Left colon (tissue), 2 donors: ENCODE measurements at regions of chr6 and their contacts with region 1.

Region 1: DNA sequence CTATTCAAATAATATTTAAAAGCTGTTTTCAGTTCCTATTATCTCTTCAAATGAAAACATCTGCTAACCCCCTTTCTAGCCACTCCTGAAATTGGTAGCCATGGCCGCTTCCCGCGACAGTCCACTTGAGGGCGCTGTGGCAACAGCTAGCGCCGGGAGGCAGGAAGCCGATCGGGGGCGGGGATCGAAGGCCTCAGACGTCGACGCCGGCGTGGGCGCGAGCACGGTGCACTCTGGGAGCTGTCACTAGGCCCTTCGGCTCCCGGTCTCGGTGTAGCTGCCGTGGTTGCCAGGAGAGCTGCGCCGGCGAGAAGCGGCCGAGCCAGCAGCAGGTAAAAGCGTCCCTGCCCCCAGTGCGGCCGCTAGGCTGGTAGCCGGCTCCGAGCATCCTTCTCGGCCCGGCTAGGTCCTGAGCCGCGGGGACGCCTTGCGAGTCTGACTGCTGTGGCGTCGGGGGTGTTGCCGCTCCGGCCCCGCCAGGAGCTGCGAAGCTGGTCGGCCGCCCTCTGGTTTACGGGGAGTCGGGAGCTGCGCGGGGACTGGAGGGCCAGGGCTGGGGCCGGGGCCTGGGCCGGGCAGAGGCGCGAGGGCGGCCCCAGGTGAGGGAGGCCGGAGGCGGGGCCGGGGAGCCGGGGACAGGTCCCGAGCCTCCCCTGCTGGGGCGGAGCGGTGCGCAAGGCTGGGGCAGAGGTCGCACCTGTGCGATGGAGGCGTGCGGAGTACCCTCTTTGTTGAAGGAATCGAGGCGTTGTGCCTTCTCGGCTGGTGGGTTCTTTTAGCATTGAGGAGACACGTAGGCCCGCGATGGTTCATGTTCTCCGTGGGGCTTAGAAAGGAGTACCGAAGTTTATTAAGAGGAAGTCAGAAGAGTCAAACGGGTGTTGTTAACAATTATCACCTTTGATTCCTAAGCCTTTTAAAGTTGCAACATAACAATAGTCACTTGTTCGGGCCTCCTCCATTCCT is at the start of gene DOP1A:
- DNase-seq: peak; percentile 96 to 99
- ATAC-seq: peak; percentile 90
- total RNA-seq, gene DOP1A: 30.8 to 34.5 TPM

Region 2: GRCh38 chr6:82693094-82693493 is 374.6 kb before region 1 on chr6:
- intact Hi-C with region 1: no loop called
- DNase-seq: peak in 1 of 2 donors; percentile 6
- ATAC-seq: no peak

Region 3: GRCh38 chr6:82775361-82775760 is 292.4 kb before region 1 on chr6:
- intact Hi-C with region 1: no loop called
- DNase-seq: no peak
- ATAC-seq: no peak

Region 4: DNA sequence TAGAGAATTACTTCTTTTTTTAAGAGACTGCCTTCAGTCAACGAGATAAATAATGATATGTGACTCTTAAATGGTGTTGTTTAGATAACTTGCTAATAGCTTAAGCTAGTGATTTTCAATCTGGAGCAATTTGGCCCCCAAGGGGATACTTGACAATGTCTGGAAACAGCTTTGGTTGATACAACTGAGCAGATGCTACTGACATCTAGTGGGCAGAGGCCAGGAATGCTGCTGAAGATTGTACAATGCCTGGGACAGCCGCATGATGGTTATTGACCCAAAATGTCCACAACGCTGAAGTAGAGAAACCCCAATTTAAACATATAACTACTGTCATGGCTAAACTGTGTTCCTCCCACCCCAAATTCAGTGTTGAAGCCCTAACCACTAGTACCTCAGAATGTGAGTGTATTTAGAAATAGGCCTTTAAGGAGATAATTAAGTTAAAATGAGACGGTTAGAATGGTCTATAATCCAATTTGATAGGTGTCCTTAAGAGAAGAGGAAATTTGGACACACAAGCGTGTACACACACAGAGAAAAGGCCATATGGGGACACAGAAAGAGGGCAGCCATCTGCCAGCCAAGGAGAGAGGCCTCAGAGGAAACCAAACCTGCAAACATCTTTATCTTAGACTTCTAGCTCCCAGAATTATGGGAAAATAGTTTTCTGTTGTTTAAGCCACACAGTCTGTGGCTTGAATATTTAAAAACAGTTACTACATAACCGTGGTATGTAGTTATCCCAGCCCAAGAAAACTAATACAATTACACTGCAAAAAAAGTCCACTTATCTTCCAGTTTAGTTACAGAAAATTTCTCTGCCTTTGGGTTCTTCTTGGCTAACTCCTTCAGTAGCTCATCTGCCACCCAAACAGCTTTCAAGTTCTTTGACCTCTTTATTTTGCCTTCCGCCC is 147.7 kb after region 1 on chr6:
- intact Hi-C with region 1: loop called in 1 of 2 experiments (anchors 5 kb)
- DNase-seq: peak in 1 of 2 donors; percentile 51
- ATAC-seq: peak; percentile 91